ENCODE measurements at regions of chr10 and their contacts with region 1.

Region 1: GRCh38 chr10:23362879-23363792 is 18.5 kb upstream of the C10orf67 start:
- DNase-seq: peak in 5 of 9 experiments; percentile 26 to 80 (median 46)
- ATAC-seq: peak; percentile 86
- H3K4me3 ChIP-seq: peak overlapping the region; percentile 8 to 19
- H3K4me3 Mint-ChIP-seq: peak overlapping the region; percentile 73
- H3K27ac ChIP-seq: peak overlapping the region; percentile 39 to 67
- H3K27ac Mint-ChIP-seq: peak overlapping the region; percentile 92
- H3K4me1 ChIP-seq: peaks cover 40% of the 10 kb centered on the region
- H3K4me1 Mint-ChIP-seq: peaks cover 42% of the 10 kb centered on the region
- H3K27me3 ChIP-seq: no peaks in the 10 kb centered on the region
- H3K27me3 Mint-ChIP-seq: no peaks in the 10 kb centered on the region
- CTCF ChIP-seq: no peak

Region 2: DNA sequence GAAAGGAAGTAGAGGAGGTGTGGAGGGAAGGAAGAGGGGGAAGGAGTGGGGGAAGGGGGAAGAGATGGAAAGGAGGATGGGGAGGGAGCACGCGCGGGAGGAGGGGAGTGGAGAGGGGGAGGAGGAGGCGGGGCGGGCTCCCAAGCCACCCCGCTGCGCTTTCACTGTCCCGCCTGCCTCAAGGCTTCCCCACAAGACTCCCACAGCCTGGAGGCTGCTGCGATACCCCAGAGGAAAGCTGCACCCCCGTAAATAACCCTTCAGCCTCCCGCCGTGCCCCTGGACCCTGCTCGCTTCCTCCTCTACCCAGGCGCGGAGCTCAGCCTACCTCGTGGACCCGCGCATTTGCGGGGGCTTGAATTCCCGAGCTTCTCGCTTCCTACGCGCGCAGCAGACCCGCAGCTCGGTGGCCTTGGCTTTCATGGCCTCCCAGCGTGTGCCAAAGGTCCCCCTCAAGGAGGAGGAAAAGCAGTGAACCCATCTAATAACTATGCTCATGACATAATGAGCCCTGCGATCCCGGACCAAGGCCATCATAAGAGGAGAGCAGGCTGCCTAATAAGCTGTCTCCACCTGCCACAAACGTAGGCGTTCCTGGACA is 18.8 kb before region 1 on chr10 and contains the start of gene C10orf67:
- CTCF ChIA-PET with region 1: interaction called, 4 read pairs
- POLR2A ChIA-PET with region 1: no interaction called
- intact Hi-C with region 1: loop called in 1 of 2 experiments (anchors 2 kb)
- DNase-seq: peak in 4 of 9 experiments; percentile 10 to 42 (median 26)
- ATAC-seq: peak; percentile 41
- H3K4me3 ChIP-seq: peak within 1 kb of the TSS; percentile 54 to 67
- H3K4me3 Mint-ChIP-seq: peak within 1 kb of the TSS; percentile 86
- H3K27ac ChIP-seq: no peak within 1 kb of the TSS
- H3K27ac Mint-ChIP-seq: peak within 1 kb of the TSS; percentile 24
- H3K4me1 ChIP-seq: peaks cover 7% of the 10 kb centered on the region
- H3K4me1 Mint-ChIP-seq: peaks cover 34% of the 10 kb centered on the region
- H3K27me3 ChIP-seq: peaks cover 0 to 3% of the 10 kb centered on the region in 2 experiments
- H3K27me3 Mint-ChIP-seq: peaks cover 10% of the 10 kb centered on the region
- CTCF ChIP-seq: no peak
- total RNA-seq, gene C10orf67: not detected

Measured in CD8-positive, alpha-beta T cell (primary cell).